ENCODE measurements at regions of chr3 and their contacts with region 1.

Region 1: GRCh38 chr3:183635431-183636220 is at the start of gene KLHL24:
- DNase-seq: peak; percentile 95
- H3K4me3 Mint-ChIP-seq: peak within 1 kb of the TSS; percentile 91
- H3K27ac Mint-ChIP-seq: peak within 1 kb of the TSS; percentile 93
- H3K4me1 Mint-ChIP-seq: peaks cover 40% of the 10 kb centered on the region
- H3K27me3 Mint-ChIP-seq: no peaks in the 10 kb centered on the region
- total RNA-seq, gene KLHL24: 26.2 to 26.9 TPM

Region 2: DNA sequence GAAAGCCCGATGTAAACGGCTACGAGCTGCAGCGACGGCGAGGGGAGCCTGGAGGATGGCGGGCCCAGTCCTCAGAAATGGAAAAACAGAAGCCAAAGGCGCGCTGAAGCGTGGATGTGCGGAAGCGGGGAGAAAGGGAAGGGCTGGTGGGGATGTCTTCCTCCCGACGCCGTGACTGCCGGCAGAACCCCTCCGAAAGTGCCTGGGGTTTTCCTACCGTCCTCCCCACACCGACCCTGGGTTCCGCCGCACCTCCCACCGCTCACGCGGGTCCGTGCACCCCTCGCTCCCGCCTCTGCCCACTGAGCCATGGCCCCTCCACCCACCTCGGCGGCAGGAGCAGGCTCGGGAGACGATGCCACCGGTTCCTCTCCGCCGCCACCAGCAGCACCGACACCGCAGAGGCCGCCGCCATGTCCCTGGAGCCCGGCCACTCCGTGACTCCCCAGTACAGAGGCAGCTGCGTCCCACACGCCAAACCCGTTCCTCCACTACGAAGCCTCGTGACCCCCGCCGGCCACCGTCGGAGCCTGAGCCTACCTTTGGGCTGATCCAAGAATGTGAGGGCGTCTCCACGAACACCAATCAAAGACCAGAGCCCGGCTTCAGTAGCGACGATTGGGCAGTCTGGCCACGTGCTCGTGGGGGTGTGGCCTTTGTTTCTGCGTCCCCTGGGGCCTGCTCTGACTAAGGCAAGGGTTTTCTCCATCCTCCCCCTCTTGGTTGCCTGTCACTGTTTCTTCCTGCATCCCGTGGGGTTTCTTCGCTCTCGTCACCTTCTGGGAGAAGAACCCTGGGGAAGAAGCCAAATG is 536.4 kb before region 1 on chr3 and contains the start of gene MCCC1:
- CTCF ChIA-PET with region 1: no interaction called
- intact Hi-C with region 1: loop called (anchors 1 kb)
- DNase-seq: peak; percentile 99
- H3K4me3 Mint-ChIP-seq: peak within 1 kb of the TSS; percentile 97
- H3K27ac Mint-ChIP-seq: peak within 1 kb of the TSS; percentile 91
- H3K4me1 Mint-ChIP-seq: peaks cover 33% of the 10 kb centered on the region
- H3K27me3 Mint-ChIP-seq: no peaks in the 10 kb centered on the region
- total RNA-seq, gene MCCC1: 21.0 to 24.9 TPM

Region 3: GRCh38 chr3:183265834-183266417 is 369.7 kb before region 1 on chr3:
- CTCF ChIA-PET with region 1: no interaction called
- intact Hi-C with region 1: loop called (anchors 10 kb)
- DNase-seq: peak; percentile 80
- H3K4me3 Mint-ChIP-seq: no peak overlapping the region
- H3K27ac Mint-ChIP-seq: no peak overlapping the region
- H3K4me1 Mint-ChIP-seq: peaks cover 6% of the 10 kb centered on the region
- H3K27me3 Mint-ChIP-seq: no peaks in the 10 kb centered on the region

Region 4: GRCh38 chr3:183515968-183516851 is 119.4 kb before region 1 on chr3:
- CTCF ChIA-PET with region 1: no interaction called
- intact Hi-C with region 1: loop called (anchors 1 kb)
- DNase-seq: peak; percentile 80
- H3K4me3 Mint-ChIP-seq: peak overlapping the region; percentile 17
- H3K27ac Mint-ChIP-seq: peak overlapping the region; percentile 90
- H3K4me1 Mint-ChIP-seq: peaks cover 81% of the 10 kb centered on the region
- H3K27me3 Mint-ChIP-seq: no peaks in the 10 kb centered on the region

Region 5: GRCh38 chr3:183680061-183680460 is 44.4 kb after region 1 on chr3:
- CTCF ChIA-PET with region 1: no interaction called
- intact Hi-C with region 1: no loop called
- DNase-seq: no peak
- H3K4me3 Mint-ChIP-seq: no peak overlapping the region
- H3K27ac Mint-ChIP-seq: no peak overlapping the region
- H3K4me1 Mint-ChIP-seq: peaks cover 4% of the 10 kb centered on the region
- H3K27me3 Mint-ChIP-seq: no peaks in the 10 kb centered on the region

Region 6: GRCh38 chr3:183734750-183735494 is 99.3 kb after region 1 on chr3:
- CTCF ChIA-PET with region 1: no interaction called
- intact Hi-C with region 1: no loop called
- DNase-seq: no peak
- H3K4me3 Mint-ChIP-seq: no peak overlapping the region
- H3K27ac Mint-ChIP-seq: no peak overlapping the region
- H3K4me1 Mint-ChIP-seq: no peaks in the 10 kb centered on the region
- H3K27me3 Mint-ChIP-seq: no peaks in the 10 kb centered on the region

Region 7: GRCh38 chr3:183766745-183767606 is 131.3 kb after region 1 on chr3:
- CTCF ChIA-PET with region 1: interaction called, 6 read pairs
- intact Hi-C with region 1: loop called (anchors 1 kb)
- DNase-seq: peak; percentile 89
- H3K4me3 Mint-ChIP-seq: no peak overlapping the region
- H3K27ac Mint-ChIP-seq: no peak overlapping the region
- H3K4me1 Mint-ChIP-seq: peaks cover 11% of the 10 kb centered on the region
- H3K27me3 Mint-ChIP-seq: no peaks in the 10 kb centered on the region

Region 8: GRCh38 chr3:184185461-184186308 is 550.1 kb after region 1 on chr3 and contains the start of gene ABCF3:
- CTCF ChIA-PET with region 1: no interaction called
- intact Hi-C with region 1: loop called (anchors 2 kb)
- DNase-seq: peak; percentile 99
- H3K4me3 Mint-ChIP-seq: peak within 1 kb of the TSS; percentile 94
- H3K27ac Mint-ChIP-seq: peak within 1 kb of the TSS; percentile 92
- H3K4me1 Mint-ChIP-seq: peaks cover 28% of the 10 kb centered on the region
- H3K27me3 Mint-ChIP-seq: no peaks in the 10 kb centered on the region
- total RNA-seq, gene ABCF3: 38.5 to 39.1 TPM

Measured in activated naive CD4-positive, alpha-beta T cell treated with anti-CD3 and anti-CD28 coated beads for 36 hours (primary cell).